Activated B cell treated with CpG ODN at 0.5 μM for 24 hours (primary cell): ENCODE measurements at regions of chr15 and their contacts with region 1.

Region 1: DNA sequence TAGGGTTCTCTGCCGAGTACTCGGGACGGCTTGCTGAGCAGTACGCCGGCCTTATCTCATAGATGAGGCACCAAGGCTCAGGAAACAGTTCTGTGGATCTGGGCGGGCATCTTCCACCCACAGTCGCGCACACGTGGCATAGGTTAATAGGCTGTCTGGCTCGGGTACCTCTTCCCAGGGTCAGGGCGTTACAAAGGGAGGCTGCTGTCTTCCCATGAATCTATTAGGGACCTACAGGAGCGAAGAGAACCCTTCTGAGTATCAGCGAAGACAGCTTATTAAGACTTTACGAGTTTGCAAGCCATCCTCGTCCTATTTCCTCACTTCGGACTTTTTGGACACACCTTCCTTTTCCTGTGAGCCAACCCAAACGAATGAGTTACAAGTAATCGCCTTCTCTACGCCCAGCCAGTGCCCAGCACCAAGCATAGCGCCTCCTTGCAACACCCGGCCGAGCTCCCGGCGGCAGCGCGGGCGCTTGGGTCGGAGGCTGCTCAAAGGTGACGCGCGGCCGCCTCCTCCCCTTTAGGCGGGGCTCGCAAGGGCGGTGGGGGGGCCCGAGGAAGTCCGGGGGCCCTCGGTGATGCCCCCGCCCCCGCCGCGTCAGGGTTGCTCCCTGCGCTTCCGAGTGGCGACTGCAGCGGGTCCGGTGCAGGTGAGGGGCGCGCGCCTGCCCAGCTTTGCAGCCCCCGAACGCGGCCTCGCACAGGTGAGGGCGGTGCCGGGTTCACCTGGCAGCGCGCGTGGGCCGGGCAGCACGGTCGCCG is at the start of gene MCTP2:
- DNase-seq: peak; percentile 86
- ATAC-seq: peak; percentile 88
- H3K4me3 Mint-ChIP-seq: peak within 1 kb of the TSS; percentile 92
- H3K27ac Mint-ChIP-seq: peak within 1 kb of the TSS; percentile 94
- H3K4me1 Mint-ChIP-seq: peaks cover 67% of the 10 kb centered on the region
- H3K27me3 Mint-ChIP-seq: no peaks in the 10 kb centered on the region
- CTCF ChIP-seq: no peak
- total RNA-seq, gene MCTP2: 46.0 and 54.2 TPM in 2 replicates

Region 2: DNA sequence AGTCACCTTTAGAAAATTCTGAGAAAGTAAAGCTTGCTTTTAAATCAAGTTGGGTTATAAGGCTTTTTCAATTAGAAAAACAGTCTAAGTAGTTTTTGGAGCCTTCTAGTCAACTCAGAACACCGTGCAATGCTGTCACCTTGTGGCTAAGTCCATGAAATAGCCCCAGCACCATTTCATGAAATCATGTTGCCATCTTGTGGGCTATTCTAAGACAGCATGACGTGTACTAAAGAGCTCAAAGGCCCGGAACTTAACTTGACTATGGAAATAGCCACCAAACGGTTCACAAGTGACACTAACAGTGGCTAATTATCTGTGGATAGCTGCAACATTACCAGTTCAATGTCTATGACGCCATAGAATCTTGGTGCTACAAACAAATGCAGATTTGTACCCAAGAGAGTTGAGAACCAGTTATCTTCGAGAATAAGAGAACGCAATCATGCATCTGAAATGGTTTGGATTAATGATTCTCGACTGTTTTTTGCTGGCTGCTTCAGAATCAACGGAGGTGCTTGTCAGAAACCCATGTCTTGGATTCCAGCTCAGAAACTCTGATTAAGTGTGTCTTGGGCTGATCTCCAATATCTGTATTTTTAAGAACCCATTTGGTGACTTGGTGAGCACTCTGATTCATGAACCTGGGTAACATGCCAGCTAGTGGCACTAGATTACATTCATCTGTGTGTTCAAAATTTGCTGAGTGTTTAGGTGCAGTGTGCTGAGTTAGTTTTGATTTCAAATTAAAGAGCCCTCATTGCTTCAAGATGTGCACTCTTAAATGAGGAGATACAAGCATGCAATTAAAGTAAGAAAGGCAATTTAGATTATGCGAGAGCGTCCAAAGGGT is 111.0 kb before region 1 on chr15:
- CTCF ChIA-PET with region 1: no interaction called
- POLR2A ChIA-PET with region 1: no interaction called
- intact Hi-C with region 1: no loop called
- DNase-seq: no peak
- ATAC-seq: peak; percentile 85
- H3K4me3 Mint-ChIP-seq: no peak overlapping the region
- H3K27ac Mint-ChIP-seq: no peak overlapping the region
- H3K4me1 Mint-ChIP-seq: no peaks in the 10 kb centered on the region
- H3K27me3 Mint-ChIP-seq: peaks cover 3% of the 10 kb centered on the region
- CTCF ChIP-seq: no peak

Region 3: GRCh38 chr15:94174399-94174802 is 56.7 kb before region 1 on chr15:
- CTCF ChIA-PET with region 1: interaction called, 4 read pairs
- POLR2A ChIA-PET with region 1: interaction called, 14 read pairs
- intact Hi-C with region 1: loop called (anchors 1 kb)
- DNase-seq: no peak
- ATAC-seq: peak; percentile 91
- H3K4me3 Mint-ChIP-seq: peak overlapping the region; percentile 39
- H3K27ac Mint-ChIP-seq: peak overlapping the region; percentile 31
- H3K4me1 Mint-ChIP-seq: peaks cover 25% of the 10 kb centered on the region
- H3K27me3 Mint-ChIP-seq: peaks cover 19% of the 10 kb centered on the region
- CTCF ChIP-seq: no peak

Region 4: DNA sequence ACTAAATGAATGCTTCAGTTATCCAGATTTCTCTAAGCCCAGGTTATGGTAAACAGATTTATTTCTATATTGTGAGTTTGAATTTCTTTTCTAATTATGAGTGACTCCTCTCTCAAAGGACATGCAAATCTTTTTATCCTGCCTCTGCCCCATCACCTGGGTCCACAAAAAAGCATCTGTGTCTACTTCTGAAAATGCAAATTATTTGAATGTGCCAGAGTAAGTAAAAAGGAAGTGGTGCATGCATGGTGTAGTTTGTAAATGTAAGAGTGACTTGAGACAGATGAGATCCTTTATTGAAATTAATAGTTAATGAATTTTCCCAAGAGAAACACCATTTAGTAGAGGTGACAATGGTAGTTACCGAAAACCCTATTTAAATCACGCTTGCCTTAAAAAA is 27.1 kb after region 1 on chr15:
- CTCF ChIA-PET with region 1: interaction called, 10 read pairs
- POLR2A ChIA-PET with region 1: interaction called, 16 read pairs
- intact Hi-C with region 1: loop called (anchors 1 kb)
- DNase-seq: no peak
- ATAC-seq: peak; percentile 72
- H3K4me3 Mint-ChIP-seq: peak overlapping the region; percentile 16
- H3K27ac Mint-ChIP-seq: peak overlapping the region; percentile 84
- H3K4me1 Mint-ChIP-seq: peaks cover 92% of the 10 kb centered on the region
- H3K27me3 Mint-ChIP-seq: no peaks in the 10 kb centered on the region
- CTCF ChIP-seq: no peak

Region 5: GRCh38 chr15:94287794-94288246 is 56.7 kb after region 1 on chr15:
- CTCF ChIA-PET with region 1: interaction called, 43 read pairs
- POLR2A ChIA-PET with region 1: interaction called, 63 read pairs
- intact Hi-C with region 1: loop called (anchors 1 kb)
- DNase-seq: peak; percentile 41
- ATAC-seq: peak; percentile 92
- H3K4me3 Mint-ChIP-seq: peak overlapping the region; percentile 80
- H3K27ac Mint-ChIP-seq: peak overlapping the region; percentile 92
- H3K4me1 Mint-ChIP-seq: peaks cover 89% of the 10 kb centered on the region
- H3K27me3 Mint-ChIP-seq: no peaks in the 10 kb centered on the region
- CTCF ChIP-seq: no peak

Region 6: GRCh38 chr15:94306700-94307650 is 75.8 kb after region 1 on chr15:
- CTCF ChIA-PET with region 1: interaction called, 7 read pairs
- POLR2A ChIA-PET with region 1: interaction called, 72 read pairs
- intact Hi-C with region 1: loop called (anchors 1 kb)
- DNase-seq: no peak
- ATAC-seq: peak; percentile 86
- H3K4me3 Mint-ChIP-seq: peak overlapping the region; percentile 66
- H3K27ac Mint-ChIP-seq: peak overlapping the region; percentile 93
- H3K4me1 Mint-ChIP-seq: peaks cover 48% of the 10 kb centered on the region
- H3K27me3 Mint-ChIP-seq: no peaks in the 10 kb centered on the region
- CTCF ChIP-seq: no peak

Region 7: DNA sequence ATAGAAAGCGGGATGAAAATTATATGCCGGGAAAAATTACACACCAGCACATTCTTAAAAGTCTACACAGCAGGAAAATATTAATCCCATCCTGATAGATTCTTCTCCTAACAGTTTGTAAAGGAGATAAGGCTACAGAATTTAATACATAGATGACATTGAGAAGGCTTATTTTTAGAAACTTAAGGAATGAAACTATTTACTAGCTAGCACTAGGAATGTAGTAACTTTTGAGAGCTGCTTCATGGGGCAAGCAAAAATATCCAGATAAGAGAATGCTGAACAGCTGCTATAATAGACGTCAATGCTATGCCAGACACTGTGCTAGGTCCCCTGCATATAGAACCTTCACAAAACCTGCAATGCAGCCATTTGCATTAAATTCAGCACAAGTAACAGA is 1186.6 kb after region 1 on chr15:
- CTCF ChIA-PET with region 1: no interaction called
- POLR2A ChIA-PET with region 1: no interaction called
- intact Hi-C with region 1: no loop called
- DNase-seq: no peak
- ATAC-seq: no peak
- H3K4me3 Mint-ChIP-seq: no peak overlapping the region
- H3K27ac Mint-ChIP-seq: no peak overlapping the region
- H3K4me1 Mint-ChIP-seq: no peaks in the 10 kb centered on the region
- H3K27me3 Mint-ChIP-seq: no peaks in the 10 kb centered on the region
- CTCF ChIP-seq: no peak